IMR-90 (cell line): ENCODE measurements at regions of chrX and their contacts with region 1.

Region 1: DNA sequence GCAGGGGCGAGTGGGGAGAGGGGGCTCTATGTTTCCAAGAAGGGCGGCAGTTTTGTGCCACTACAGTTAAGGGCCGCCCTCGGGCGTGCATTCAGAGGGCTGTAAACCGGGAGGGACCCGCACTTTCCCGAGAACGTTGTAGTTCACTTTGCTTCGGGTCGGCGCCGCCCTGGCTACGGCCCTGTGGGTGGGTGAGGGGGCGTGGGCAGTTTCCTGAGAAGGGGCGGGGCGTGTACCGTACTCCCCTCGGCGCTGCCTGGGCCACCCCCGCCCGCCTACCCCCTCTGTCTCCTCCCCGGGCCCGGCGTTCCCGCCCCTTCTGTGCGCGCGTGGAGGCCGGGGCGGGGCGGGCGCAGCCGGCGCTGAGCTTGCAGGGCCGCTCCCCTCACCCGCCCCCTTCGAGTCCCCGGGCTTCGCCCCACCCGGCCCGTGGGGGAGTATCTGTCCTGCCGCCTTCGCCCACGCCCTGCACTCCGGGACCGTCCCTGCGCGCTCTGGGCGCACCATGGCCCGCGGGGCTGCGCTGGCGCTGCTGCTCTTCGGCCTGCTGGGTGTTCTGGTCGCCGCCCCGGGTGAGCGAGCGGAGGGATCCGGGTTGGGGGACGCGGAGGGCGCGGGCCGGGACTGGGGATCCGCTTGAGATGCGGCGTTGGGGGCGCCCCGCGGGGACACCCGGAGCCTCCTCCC is at the start of gene CD99:
- DNase-seq: peak; percentile 78
- ATAC-seq: peak; percentile 98
- H3K4me3 ChIP-seq: peak within 1 kb of the TSS; percentile 91
- H3K27ac ChIP-seq: peak within 1 kb of the TSS; percentile 61
- H3K4me1 ChIP-seq: 0 out of 2 replicates have a peak, but pooled peaks cover 2% of the 10 kb centered on the region
- H3K27me3 ChIP-seq: peaks cover 4% of the 10 kb centered on the region; the same call in 1 of the 2 replicates
- CTCF ChIP-seq: no peak
- POLR2A ChIP-seq: 0 out of 2 replicates have a peak, but pooled peaks have one; percentile 39
- RAD21 ChIP-seq: no peak
- total RNA-seq, gene CD99: 102 and 107 TPM in 2 replicates

Region 2: DNA sequence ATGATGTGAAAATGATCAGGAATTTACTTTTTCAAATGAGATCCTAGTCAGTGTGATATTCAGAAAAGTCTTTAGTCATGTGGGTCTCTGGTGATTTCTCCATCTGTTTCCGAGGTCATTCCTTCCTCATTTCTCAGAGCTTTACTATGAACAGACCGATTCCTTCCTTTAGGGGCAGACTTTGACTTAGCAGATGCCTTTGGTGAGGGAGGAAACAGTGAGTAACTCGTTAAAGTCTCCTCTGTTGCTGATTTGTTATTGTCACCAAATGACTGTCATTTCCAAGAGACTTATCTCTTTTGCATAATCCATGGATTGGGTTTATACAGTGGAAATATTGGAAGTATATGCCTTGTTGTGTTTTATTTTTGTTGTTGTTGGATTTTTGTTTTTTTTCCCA is 76.1 kb before region 1 on chrX:
- CTCF ChIA-PET with region 1: no interaction called
- POLR2A ChIA-PET with region 1: no interaction called
- dilution Hi-C with region 1: no loop called
- in situ Hi-C with region 1: no loop called
- intact Hi-C with region 1: loop called (anchors 5 kb)
- DNase-seq: peak; percentile 83
- ATAC-seq: peak; percentile 93
- H3K4me3 ChIP-seq: no peak overlapping the region
- H3K27ac ChIP-seq: no peak overlapping the region
- H3K4me1 ChIP-seq: peaks cover 6% of the 10 kb centered on the region
- H3K27me3 ChIP-seq: no peaks in the 10 kb centered on the region
- CTCF ChIP-seq: peak; percentile 71
- POLR2A ChIP-seq: no peak
- RAD21 ChIP-seq: peak; percentile 52

Region 3: GRCh38 chrX:2677764-2678163 is 13.2 kb before region 1 on chrX:
- CTCF ChIA-PET with region 1: no interaction called
- POLR2A ChIA-PET with region 1: no interaction called
- dilution Hi-C with region 1: no loop called
- in situ Hi-C with region 1: no loop called
- intact Hi-C with region 1: loop called (anchors 1 kb)
- DNase-seq: peak; percentile 99
- ATAC-seq: peak; percentile 92
- H3K4me3 ChIP-seq: no peak overlapping the region
- H3K27ac ChIP-seq: peak overlapping the region; percentile 47; the same call in 1 of the 2 replicates
- H3K4me1 ChIP-seq: peaks cover 13% of the 10 kb centered on the region
- H3K27me3 ChIP-seq: peaks cover 2% of the 10 kb centered on the region; the same call in 1 of the 2 replicates
- CTCF ChIP-seq: no peak
- POLR2A ChIP-seq: no peak
- RAD21 ChIP-seq: peak; percentile 21

Region 4: DNA sequence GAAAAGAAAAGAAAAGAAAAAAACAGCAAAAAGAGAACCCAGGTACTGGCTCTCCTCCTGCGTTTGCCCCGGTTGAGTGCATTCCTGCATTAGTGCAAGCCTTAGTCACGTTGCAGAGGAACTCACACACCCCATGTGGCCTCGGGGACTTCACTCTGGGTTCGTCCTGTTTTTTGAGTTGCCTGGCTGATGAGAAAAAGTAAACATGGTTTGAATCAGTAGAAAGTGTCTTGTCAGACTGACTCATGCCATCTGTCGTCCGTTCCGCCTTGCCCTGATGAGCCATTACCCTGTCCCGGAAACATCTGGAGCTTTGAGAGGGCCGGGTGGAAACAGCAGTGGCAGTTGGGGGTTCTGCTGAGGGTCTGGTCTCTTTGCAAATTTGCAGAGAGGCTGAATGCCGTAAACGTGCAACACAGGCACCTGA is 16.3 kb after region 1 on chrX:
- CTCF ChIA-PET with region 1: no interaction called
- POLR2A ChIA-PET with region 1: no interaction called
- dilution Hi-C with region 1: no loop called
- in situ Hi-C with region 1: no loop called
- intact Hi-C with region 1: loop called (anchors 2 kb)
- DNase-seq: peak; percentile 95
- ATAC-seq: peak; percentile 87
- H3K4me3 ChIP-seq: no peak overlapping the region
- H3K27ac ChIP-seq: peak overlapping the region; percentile 25; the same call in 1 of the 2 replicates
- H3K4me1 ChIP-seq: peaks cover 25% of the 10 kb centered on the region
- H3K27me3 ChIP-seq: no peaks in the 10 kb centered on the region
- CTCF ChIP-seq: no peak
- POLR2A ChIP-seq: no peak
- RAD21 ChIP-seq: no peak